ENCODE measurements at regions of chr7 and their contacts with region 1.

Region 1: DNA sequence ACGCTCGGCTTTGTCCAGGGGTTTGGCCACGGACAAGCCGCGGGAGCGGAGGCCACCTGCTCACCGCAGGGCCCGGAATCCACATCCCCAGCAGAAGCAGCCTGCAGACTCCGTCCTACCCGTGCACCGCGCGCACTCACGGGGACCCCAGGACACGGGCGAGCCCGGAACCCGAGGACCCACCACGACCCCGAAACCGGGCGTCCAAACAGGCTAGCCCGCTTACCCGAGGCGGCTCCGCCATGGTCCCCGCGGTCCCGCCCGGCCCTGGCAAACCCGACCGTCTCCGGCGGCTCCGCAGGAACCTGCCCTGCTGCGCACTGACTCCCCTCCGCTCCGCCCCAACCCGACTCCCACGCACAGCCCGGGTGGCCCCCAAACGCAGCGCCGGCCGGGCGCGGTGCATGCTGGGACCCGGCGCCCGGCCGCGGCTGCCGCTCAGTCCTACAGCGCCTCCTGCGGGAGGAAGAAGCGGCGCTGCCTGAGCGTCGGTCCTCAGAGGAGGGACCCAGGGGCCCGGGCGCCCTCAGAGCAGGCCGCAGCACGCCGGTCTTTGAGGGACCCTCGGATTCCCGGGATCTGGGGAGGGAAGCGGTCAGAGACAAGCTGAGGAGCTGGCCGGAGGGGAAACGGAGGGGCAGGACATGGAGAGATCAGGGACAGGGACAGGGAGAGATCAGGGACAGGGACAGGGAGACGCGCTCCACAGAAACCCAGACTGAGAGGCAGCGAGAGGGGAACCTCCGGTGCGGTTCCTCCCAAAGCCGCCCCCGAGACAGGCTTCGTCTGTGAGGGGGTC is at the start of gene ZNF786:
- DNase-seq: peak; percentile 95
- total RNA-seq, gene ZNF786: 3.0 TPM

Region 2: GRCh38 chr7:148698397-148699023 is 392.1 kb before region 1 on chr7 and contains the start of gene CUL1:
- intact Hi-C with region 1: loop called (anchors 5 kb)
- DNase-seq: peak; percentile 93
- total RNA-seq, gene CUL1: 42.3 TPM

Region 3: DNA sequence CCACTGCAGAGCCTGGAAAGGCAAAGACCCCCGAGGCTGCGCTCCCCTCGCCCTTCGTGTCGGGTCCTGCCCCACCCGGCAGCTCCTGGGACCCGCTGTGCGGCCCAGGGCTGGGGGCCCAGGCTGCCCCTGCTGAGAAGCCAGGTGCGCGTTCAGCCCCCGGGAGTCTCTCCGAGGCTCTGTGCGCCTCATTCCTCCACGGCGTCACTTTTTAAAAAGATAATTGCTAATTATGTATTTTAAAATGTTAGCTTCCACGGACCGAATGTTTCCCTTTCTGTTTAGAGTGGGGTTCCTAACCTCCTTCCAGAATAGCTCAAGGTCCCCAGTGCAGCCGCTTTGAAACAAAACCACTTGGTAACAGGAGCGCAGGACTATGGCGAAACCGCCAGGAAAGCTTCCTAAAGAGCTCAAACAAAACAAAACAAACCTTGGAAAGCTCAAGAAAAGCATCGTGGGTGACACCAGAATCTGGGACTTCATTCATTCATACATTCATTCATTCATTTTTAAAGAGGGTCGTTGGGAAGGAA is 107.9 kb before region 1 on chr7:
- intact Hi-C with region 1: no loop called
- DNase-seq: no peak

Region 4: DNA sequence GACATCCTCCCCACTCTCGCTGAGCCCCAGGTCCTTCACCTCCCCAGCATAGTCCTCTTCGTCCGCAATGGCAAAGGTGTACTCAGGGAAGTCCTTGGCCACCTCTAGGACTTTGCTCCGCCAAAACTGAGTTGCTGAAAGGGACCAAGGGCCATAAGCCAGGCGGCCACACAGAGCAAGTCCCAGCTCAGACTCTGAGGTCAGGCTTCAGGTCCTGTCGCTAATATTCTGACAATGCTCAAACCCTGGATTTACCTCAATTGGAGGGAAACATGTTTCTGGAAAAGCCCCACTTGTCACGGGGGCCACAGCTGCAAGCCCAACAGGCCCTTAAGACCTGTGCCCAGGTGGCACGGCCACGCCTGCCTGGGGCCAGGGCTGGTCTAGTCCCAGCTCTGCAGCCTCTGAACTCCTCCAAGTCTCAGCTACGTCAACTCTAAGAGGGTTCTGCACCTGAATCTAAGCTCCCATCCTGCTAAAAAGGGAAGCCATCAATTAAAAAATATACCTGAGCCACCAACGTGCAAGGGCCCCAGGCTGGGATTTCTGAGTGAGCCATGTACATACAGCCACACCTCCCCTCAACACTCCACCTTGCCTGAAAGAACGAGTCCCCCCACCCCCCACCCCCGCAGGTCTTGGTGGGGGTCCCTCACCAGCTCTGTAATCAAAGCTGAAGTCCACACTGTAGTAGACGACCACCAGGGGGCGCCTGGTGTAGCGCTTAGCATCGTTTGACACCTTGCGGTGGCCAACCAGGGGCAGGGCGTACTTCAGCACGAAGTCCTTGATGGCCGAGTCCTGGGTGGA is 85.2 kb before region 1 on chr7:
- intact Hi-C with region 1: loop called (anchors 1 kb)
- DNase-seq: peak; percentile 86

Region 5: GRCh38 chr7:149028346-149029109 is 62.1 kb before region 1 on chr7 and contains the start of gene PDIA4:
- intact Hi-C with region 1: loop called (anchors 2 kb)
- DNase-seq: peak; percentile 100
- total RNA-seq, gene PDIA4: 38.5 TPM

Region 6: DNA sequence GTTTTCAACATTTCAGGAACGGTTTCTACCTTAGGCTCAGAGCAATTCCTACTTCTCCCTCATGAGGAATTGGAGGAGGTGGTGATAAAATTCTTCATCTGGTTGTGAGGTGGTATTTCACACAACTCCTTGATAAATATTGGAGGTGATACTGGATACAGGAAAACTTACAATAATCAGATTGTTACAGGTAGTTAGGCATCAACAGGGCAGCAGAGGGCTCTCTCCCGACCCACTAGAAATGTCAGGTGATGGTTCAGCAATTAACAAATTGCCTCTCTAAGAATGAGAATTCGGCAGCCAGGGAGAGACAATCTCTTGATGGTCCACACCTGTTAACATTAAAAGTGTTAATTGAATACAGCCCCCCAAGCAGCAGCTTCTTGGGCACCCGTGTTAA is 22.7 kb before region 1 on chr7:
- intact Hi-C with region 1: loop called (anchors 1 kb)
- DNase-seq: no peak

Region 7: DNA sequence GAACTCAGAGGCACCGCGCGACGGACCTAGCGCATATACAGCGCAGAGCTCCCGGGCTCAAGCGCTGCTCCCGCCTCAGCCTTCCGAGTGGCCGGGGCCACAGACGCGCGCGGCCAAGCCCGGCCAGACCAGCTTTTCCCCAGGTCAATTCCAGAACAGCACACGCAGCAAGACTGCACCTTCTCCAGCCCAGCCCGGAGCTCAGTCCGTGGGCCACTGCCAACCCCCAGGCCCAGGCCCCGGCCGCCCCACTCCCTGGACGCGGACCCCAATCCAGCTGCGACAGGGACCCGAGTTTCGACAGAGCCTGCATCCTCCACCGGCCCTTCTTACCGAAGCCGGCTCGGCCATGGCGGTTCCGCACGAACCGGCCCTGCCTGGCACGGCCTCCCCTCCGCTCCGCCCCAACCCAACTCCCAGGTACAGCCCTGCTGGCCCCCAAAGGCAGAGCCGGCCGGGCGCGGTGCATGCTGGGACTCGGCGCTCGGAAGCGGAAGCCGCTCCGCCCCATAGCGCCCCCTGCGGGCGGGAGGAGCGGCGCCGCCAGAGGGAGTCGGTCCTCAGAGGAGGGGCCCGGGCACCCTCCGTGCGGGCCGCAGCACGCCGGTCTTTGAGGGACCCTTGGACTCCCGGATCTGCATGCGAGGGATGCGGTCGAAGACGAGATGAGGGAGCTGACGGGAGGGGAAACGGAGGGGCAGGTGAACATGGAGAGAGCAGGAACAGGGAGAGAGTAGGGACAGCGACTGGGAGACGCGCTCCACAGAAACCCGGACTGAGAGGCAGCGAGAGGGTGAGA is 35.5 kb after region 1 on chr7 and contains the start of gene ZNF425:
- intact Hi-C with region 1: loop called (anchors 1 kb)
- DNase-seq: peak; percentile 95
- total RNA-seq, gene ZNF425: 0.78 TPM

Region 8: GRCh38 chr7:149147072-149147751 is 56.6 kb after region 1 on chr7 and contains the start of gene ZNF398:
- intact Hi-C with region 1: loop called (anchors 5 kb)
- DNase-seq: peak; percentile 90
- total RNA-seq, gene ZNF398: 7.4 TPM

Region 9: GRCh38 chr7:149559711-149560110 is 469.1 kb after region 1 on chr7:
- intact Hi-C with region 1: no loop called
- DNase-seq: no peak

Measured in cardiac septum (tissue), 1 donor.